Activated CD4-positive, alpha-beta T cell treated with anti-CD3 and anti-CD28 coated beads for 36 hours (primary cell): ENCODE measurements at regions of chr12 and their contacts with region 1.

Region 1: GRCh38 chr12:84912198-84913128 is at the start of gene SLC6A15:
- DNase-seq: peak; percentile 67
- ATAC-seq: peak; percentile 69
- H3K4me3 Mint-ChIP-seq: peak within 1 kb of the TSS; percentile 62
- H3K27ac Mint-ChIP-seq: no peak within 1 kb of the TSS
- H3K4me1 Mint-ChIP-seq: peaks cover 11% of the 10 kb centered on the region
- H3K27me3 Mint-ChIP-seq: peaks cover 42% of the 10 kb centered on the region
- total RNA-seq, gene SLC6A15: 0.25 to 0.43 TPM

Region 2: GRCh38 chr12:85279449-85280164 is 367.1 kb after region 1 on chr12:
- CTCF ChIA-PET with region 1: no interaction called
- POLR2A ChIA-PET with region 1: no interaction called
- intact Hi-C with region 1: loop called in 1 of 2 experiments (anchors 5 kb)
- DNase-seq: peak; percentile 9
- ATAC-seq: no peak
- H3K4me3 Mint-ChIP-seq: no peak overlapping the region
- H3K27ac Mint-ChIP-seq: no peak overlapping the region
- H3K4me1 Mint-ChIP-seq: peaks cover 5% of the 10 kb centered on the region
- H3K27me3 Mint-ChIP-seq: peaks cover 58% of the 10 kb centered on the region